ENCODE measurements at regions of chr2 and their contacts with region 1.

Region 1: GRCh38 chr2:152635635-152636298 is 81.5 kb downstream of the PRPF40A start:
- DNase-seq: peak; percentile 35 to 59
- ATAC-seq: peak; percentile 54 to 85 (median 66)
- H3K4me3 ChIP-seq: no peak overlapping the region
- H3K27ac ChIP-seq: no peak overlapping the region
- H3K4me1 ChIP-seq: peaks cover 4% of the 10 kb centered on the region
- H3K27me3 ChIP-seq: no peaks in the 10 kb centered on the region
- CTCF ChIP-seq: peak; percentile 84

Region 2: GRCh38 chr2:151655663-151656398 is 979.9 kb before region 1 on chr2:
- intact Hi-C with region 1: no loop called
- DNase-seq: peak in 1 of 2 donors; percentile 54
- ATAC-seq: peak; percentile 33 to 58 (median 47)
- H3K4me3 ChIP-seq: no peak overlapping the region
- H3K27ac ChIP-seq: peak overlapping the region; percentile 50
- H3K4me1 ChIP-seq: peaks cover 78% of the 10 kb centered on the region
- H3K27me3 ChIP-seq: no peaks in the 10 kb centered on the region
- CTCF ChIP-seq: no peak

Region 3: DNA sequence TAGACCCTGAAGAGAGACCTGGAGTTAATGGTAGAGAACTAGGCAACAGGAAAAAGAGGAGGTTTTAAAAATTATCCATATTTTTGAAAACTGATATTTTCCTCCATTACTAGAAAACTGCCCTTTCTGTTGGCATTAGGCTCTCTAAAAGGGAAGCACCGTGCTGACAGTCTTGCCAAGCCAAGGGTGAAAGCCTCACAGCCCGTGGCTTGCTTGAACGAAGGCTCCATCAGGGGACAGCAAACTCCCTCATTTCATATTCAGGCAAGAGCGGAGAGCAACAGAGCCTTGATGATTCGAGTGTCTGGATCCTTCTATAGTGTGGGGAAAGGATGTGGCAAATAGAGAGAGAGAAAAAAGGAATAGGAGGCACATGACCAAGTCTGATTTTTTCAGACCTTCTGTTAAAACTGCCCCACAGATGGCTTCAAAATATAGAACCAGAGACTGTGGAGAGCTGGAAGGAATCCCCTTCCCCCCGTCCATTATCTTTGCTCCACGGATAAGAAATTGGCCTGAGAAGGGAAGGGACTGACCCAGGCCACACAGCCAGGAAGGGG is 603.9 kb before region 1 on chr2:
- intact Hi-C with region 1: loop called (anchors 5 to 10 kb)
- DNase-seq: no peak
- ATAC-seq: no peak
- H3K4me3 ChIP-seq: no peak overlapping the region
- H3K27ac ChIP-seq: no peak overlapping the region
- H3K4me1 ChIP-seq: peaks cover under 1% of the 10 kb centered on the region
- H3K27me3 ChIP-seq: no peaks in the 10 kb centered on the region
- CTCF ChIP-seq: no peak

Region 4: DNA sequence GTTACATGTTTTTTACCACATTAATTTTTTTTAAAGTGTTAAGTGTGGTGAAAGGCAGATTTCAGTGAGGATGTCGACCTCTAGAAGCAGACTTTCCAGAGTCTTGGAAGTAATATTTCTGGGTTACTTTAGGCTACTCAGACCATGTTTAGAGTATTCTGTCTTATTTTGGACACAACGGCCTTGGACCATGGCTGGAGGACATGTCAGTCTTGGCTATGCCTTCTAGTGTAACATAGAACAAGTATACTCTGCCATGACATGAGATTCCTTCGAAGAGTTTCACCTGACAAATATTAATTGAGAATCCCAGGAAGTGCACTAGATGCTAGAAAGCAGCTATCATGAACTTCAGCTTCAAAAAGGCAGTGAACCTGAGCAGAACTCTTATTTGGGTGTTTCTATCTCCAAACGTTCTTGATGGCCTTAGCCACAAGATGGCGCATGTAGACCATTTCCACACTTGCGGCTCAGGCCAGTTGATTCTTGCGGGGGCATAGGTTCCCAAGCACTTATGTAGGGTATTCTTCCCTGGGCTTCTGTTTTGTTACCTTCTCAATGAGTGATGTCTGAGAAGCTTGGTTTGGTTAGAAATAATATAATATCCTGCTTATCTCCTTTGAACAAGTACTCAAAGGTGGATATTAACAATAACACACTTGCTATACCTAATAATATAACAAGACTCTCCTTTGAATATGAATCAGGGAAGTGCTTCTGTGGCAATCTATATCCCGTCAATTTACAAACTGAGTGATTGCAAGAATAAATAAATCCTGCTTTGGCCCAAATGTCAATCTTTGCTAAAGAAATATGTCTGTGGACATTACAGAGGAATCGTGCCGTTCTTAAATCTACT is 598.9 kb before region 1 on chr2:
- intact Hi-C with region 1: loop called (anchors 5 to 10 kb)
- DNase-seq: peak; percentile 41 to 68
- ATAC-seq: peak; percentile 78 to 92 (median 81)
- H3K4me3 ChIP-seq: no peak overlapping the region
- H3K27ac ChIP-seq: no peak overlapping the region
- H3K4me1 ChIP-seq: peaks cover 8% of the 10 kb centered on the region
- H3K27me3 ChIP-seq: no peaks in the 10 kb centered on the region
- CTCF ChIP-seq: peak; percentile 86

Region 5: GRCh38 chr2:152175458-152176325 is 460.1 kb before region 1 on chr2 and contains the start of gene STAM2:
- intact Hi-C with region 1: loop called in 1 of 2 experiments (anchors 5 kb)
- DNase-seq: peak; percentile 93 to 97
- ATAC-seq: peak; percentile 94 to 95 (median 94)
- H3K4me3 ChIP-seq: peak within 1 kb of the TSS; percentile 75
- H3K27ac ChIP-seq: peak within 1 kb of the TSS; percentile 94
- H3K4me1 ChIP-seq: peaks cover 29% of the 10 kb centered on the region
- H3K27me3 ChIP-seq: no peaks in the 10 kb centered on the region
- CTCF ChIP-seq: peak; percentile 96
- total RNA-seq, gene STAM2: 15.5 to 21.1 (median 18.0) TPM

Region 6: DNA sequence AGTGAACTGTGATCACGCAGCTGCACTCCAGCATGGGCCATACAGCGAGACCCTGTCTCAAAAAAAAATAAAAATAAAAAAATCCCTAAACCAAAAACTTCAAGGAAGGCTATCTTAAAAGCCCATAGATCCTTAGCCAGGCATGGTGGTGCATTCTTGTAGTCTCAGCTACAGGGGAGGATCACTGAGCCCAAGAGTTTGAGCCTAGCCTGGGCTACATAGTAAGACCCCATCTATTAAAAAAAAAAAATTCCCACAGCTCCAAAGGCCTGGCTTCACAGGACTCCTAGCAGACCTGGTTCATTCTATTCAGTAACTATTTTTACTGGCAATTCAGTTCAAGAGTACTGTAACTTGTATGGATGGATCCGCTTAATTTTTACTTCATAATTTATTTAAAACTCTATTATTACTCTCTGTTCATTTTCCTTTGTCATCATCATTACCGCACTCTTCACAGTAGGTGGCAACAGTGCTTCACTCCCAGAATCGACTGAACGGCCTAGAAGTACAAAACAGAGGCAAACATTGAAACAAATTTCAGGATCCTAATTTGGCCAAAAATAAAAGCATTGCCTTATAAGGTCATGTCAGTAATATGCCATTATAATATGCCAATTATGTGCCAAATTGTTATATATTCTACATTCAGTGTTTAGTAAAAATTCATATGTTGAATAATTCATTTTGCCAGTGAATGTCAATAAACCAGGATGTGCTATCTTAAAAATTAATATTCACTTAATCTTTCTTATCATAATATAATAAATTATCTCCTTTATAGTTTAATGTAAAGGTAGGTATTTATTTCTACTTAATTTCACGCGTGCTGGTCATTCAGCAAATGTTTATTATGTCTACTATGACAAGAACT is 445.9 kb before region 1 on chr2:
- intact Hi-C with region 1: loop called (anchors 2 to 5 kb)
- DNase-seq: no peak
- ATAC-seq: peak; percentile 78 to 95 (median 88)
- H3K4me3 ChIP-seq: no peak overlapping the region
- H3K27ac ChIP-seq: no peak overlapping the region
- H3K4me1 ChIP-seq: no peaks in the 10 kb centered on the region
- H3K27me3 ChIP-seq: no peaks in the 10 kb centered on the region
- CTCF ChIP-seq: peak; percentile 89

Region 7: DNA sequence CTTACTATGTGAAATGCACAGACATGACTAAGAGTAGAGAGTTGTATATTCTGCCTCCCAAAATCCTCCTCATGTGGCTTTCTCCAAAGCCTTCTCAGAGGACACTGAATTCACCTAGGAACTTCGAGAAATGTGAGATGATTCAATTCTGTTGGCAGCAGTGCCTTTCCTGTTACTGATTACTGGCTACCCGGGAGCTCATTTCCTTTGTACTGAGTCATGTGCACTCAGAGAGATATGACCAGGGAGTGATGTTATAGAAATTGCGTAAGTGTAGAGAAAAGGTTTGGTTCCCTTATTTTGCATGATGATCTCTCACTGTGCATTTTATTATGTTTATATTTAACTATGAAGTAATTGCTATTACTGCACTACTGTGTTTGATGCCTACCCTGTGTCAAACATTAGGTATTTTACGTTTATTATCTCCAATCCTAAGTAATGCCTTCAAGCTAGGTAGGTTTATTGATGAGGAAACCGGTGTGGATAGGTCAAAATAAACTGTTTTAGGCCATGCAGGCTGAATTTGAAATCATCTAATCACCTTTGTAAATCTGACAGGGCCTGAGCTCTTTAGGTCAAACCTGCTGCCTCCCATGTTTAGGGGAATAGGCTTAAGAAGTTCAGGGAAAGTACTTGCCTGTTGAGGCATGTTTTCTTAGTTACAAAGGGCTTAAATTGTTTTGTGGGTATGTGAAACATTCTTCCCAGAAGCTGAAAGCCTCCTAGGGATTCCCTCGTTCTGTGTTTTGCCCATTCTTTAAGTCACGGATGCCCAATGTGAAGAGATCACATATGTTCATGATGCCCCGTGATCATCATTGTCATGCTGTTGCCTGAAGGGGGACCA is 214.0 kb before region 1 on chr2:
- intact Hi-C with region 1: loop called in 1 of 2 experiments (anchors 10 kb)
- DNase-seq: no peak
- ATAC-seq: peak; percentile 84 to 94 (median 91)
- H3K4me3 ChIP-seq: no peak overlapping the region
- H3K27ac ChIP-seq: peak overlapping the region; percentile 77
- H3K4me1 ChIP-seq: peaks cover 62% of the 10 kb centered on the region
- H3K27me3 ChIP-seq: no peaks in the 10 kb centered on the region
- CTCF ChIP-seq: no peak

Region 8: GRCh38 chr2:152483276-152484063 is 152.3 kb before region 1 on chr2:
- intact Hi-C with region 1: no loop called
- DNase-seq: no peak
- ATAC-seq: peak in 1 of 4 donors; percentile 18
- H3K4me3 ChIP-seq: no peak overlapping the region
- H3K27ac ChIP-seq: peak overlapping the region; percentile 21
- H3K4me1 ChIP-seq: peaks cover 43% of the 10 kb centered on the region
- H3K27me3 ChIP-seq: no peaks in the 10 kb centered on the region
- CTCF ChIP-seq: no peak

Region 9: GRCh38 chr2:152790883-152791282 is 155.1 kb after region 1 on chr2:
- intact Hi-C with region 1: no loop called
- DNase-seq: no peak
- ATAC-seq: no peak
- H3K4me3 ChIP-seq: no peak overlapping the region
- H3K27ac ChIP-seq: no peak overlapping the region
- H3K4me1 ChIP-seq: no peaks in the 10 kb centered on the region
- H3K27me3 ChIP-seq: peaks cover 0 to 2% (median 0%) of the 10 kb centered on the region in 3 donors
- CTCF ChIP-seq: no peak